Panc1 (cell line): ENCODE measurements at regions of chr18 and their contacts with region 1.

Region 1: DNA sequence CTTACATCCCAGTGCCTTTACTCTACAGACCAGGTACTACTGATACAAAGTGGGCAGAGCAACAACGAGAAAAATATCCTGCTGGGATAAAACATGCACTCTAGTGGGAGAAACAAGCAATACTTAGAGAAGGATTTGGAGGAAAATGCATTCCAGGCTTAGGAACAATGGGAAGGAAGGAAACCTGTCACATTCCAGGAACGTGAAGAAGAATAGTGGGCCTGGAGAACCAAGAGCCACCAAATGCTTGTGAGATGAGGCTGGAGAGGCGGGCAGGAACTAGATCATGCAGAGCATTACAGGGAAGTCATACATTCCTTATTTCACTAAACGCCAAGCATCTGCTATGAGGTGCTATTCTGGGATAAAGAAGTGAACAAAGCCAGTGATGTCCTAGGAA is 342.3 kb downstream of the DCC start:
- DNase-seq: no peak
- ATAC-seq: no peak
- H3K4me3 ChIP-seq: no peak overlapping the region
- H3K27ac ChIP-seq: no peak overlapping the region
- H3K4me1 ChIP-seq: no peaks in the 10 kb centered on the region
- H3K27me3 ChIP-seq: no peaks in the 10 kb centered on the region
- CTCF ChIP-seq: no peak

Region 2: DNA sequence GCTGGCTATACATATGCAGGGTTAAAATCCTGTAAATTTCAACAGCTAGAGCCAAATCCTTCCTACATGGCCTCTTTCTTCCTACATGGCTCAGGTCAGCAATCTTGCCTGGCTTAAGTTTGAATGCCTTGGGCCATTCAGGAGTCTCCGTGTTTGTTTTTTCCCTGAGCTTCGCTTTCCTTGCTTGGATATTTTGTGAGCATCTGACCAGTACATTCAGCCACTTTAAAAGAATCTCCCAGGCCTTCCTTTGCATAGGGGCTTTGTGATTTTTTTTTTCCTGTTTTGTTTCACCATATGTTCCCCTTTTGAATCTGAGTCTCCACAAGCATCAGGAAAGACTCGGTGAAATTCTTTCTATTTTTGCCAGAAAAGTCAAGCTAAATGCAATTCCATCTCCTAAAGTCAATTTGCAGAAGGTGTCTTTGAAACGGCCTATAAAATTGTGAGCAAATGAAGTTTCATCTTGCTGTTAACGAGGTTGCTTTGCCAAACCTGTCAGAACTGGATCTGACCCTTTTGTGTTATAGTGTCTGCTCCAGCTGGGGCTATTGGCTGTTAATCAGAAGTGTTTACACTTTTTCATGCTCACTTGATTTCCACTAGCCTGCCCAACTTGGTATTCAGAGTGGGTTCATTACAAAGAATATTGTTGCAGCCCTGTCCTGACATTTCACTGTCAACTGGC is 85.4 kb before region 1 on chr18:
- CTCF ChIA-PET with region 1: no interaction called
- POLR2A ChIA-PET with region 1: no interaction called
- in situ Hi-C with region 1: no loop called
- intact Hi-C with region 1: no loop called
- DNase-seq: no peak
- ATAC-seq: no peak
- H3K4me3 ChIP-seq: no peak overlapping the region
- H3K27ac ChIP-seq: no peak overlapping the region
- H3K4me1 ChIP-seq: no peaks in the 10 kb centered on the region
- H3K27me3 ChIP-seq: no peaks in the 10 kb centered on the region
- CTCF ChIP-seq: no peak

Region 3: GRCh38 chr18:52829876-52830405 is 147.7 kb after region 1 on chr18:
- CTCF ChIA-PET with region 1: no interaction called
- POLR2A ChIA-PET with region 1: interaction called, 11 read pairs
- in situ Hi-C with region 1: no loop called
- intact Hi-C with region 1: no loop called
- DNase-seq: no peak
- ATAC-seq: no peak
- H3K4me3 ChIP-seq: no peak overlapping the region
- H3K27ac ChIP-seq: no peak overlapping the region
- H3K4me1 ChIP-seq: no peaks in the 10 kb centered on the region
- H3K27me3 ChIP-seq: no peaks in the 10 kb centered on the region
- CTCF ChIP-seq: no peak

Region 4: GRCh38 chr18:53380063-53380639 is 697.9 kb after region 1 on chr18:
- CTCF ChIA-PET with region 1: no interaction called
- POLR2A ChIA-PET with region 1: no interaction called
- in situ Hi-C with region 1: no loop called
- intact Hi-C with region 1: no loop called
- DNase-seq: peak; percentile 22
- ATAC-seq: no peak
- H3K4me3 ChIP-seq: no peak overlapping the region
- H3K27ac ChIP-seq: no peak overlapping the region
- H3K4me1 ChIP-seq: no peaks in the 10 kb centered on the region
- H3K27me3 ChIP-seq: no peaks in the 10 kb centered on the region
- CTCF ChIP-seq: peak; percentile 60; the same call in 1 of the 2 replicates